ENCODE measurements at regions of chr16 and their contacts with region 1.

Region 1: DNA sequence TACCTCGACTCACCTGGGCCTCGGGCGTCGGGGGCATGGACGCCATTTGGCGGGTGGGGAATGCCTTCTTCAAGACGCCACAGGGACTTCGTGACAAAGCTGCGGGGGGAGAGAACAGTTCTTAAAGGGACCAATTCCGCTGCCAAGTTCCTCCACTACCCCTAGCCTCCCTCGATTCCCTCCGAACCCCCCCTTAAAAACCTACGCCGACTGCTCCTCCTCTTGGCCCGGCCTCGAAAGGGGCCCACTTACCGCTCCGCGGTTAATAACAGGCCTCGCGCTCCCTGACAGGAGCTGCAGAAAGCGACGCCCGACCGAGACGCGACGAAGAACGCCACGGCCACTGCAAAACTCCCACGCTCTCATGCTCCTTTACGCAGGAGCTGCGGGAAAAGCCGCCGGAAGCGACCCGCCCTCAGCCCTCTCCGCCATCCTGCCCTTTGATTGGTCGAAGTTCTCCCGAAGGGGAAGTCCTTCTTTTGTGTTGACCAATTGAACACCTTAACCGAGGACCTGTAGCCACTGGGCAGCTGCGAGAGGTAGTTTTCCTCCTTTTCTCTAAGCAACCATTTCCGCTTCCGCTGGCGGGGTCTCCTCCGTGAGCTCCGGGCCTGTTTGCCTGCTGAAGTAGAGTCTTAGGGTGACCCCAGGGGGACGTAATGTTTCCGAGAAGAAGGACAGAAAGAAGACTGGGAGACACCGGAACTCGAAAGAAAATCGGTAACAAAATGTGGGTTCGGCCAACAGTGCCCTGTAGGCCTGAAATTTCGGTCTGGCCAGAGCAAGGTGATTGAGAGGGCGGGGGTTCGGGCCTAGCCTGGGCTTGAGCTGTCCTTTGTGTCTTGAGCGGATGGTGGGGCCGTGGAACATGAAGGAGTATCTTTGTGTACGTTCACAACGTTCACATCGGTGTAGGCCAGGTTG is at the starts of genes NAA60 and ZNF597:
- DNase-seq: peak; percentile 85 to 89
- H3K4me3 ChIP-seq: peak within 1 kb of the TSS; percentile 61
- H3K4me3 Mint-ChIP-seq: peak within 1 kb of the TSS; percentile 91
- H3K27ac Mint-ChIP-seq: peak within 1 kb of the TSS; percentile 94
- H3K4me1 ChIP-seq: no peaks in the 10 kb centered on the region
- H3K4me1 Mint-ChIP-seq: no peaks in the 10 kb centered on the region
- H3K27me3 ChIP-seq: no peaks in the 10 kb centered on the region
- H3K27me3 Mint-ChIP-seq: no peaks in the 10 kb centered on the region
- CTCF ChIP-seq: no peak
- total RNA-seq, gene NAA60: 84.9 and 92.8 TPM in 2 replicates
- total RNA-seq, gene ZNF597: 3.7 and 3.8 TPM in 2 replicates

Region 2: GRCh38 chr16:3282730-3283524 is 160.4 kb before region 1 on chr16 and contains the start of gene ZNF263:
- CTCF ChIA-PET with region 1: no interaction called
- POLR2A ChIA-PET with region 1: interaction called, 14 read pairs
- intact Hi-C with region 1: loop called (anchors 5 kb)
- DNase-seq: peak; percentile 96
- H3K4me3 ChIP-seq: peak within 1 kb of the TSS; percentile 72
- H3K4me3 Mint-ChIP-seq: peak within 1 kb of the TSS; percentile 98
- H3K27ac Mint-ChIP-seq: peak within 1 kb of the TSS; percentile 99
- H3K4me1 ChIP-seq: peaks cover 19% of the 10 kb centered on the region
- H3K4me1 Mint-ChIP-seq: no peaks in the 10 kb centered on the region
- H3K27me3 ChIP-seq: no peaks in the 10 kb centered on the region
- H3K27me3 Mint-ChIP-seq: no peaks in the 10 kb centered on the region
- CTCF ChIP-seq: no peak
- total RNA-seq, gene ZNF263: 37.0 and 37.4 TPM in 2 replicates

Region 3: GRCh38 chr16:3457434-3458252 is 14.3 kb after region 1 on chr16:
- CTCF ChIA-PET with region 1: interaction called, 6 read pairs
- POLR2A ChIA-PET with region 1: interaction called, 8 read pairs
- intact Hi-C with region 1: loop called (anchors 2 kb)
- DNase-seq: peak; percentile 86 to 95
- H3K4me3 ChIP-seq: peak overlapping the region; percentile 98
- H3K4me3 Mint-ChIP-seq: peak overlapping the region; percentile 76
- H3K27ac Mint-ChIP-seq: peak overlapping the region; percentile 82
- H3K4me1 ChIP-seq: peaks cover 17% of the 10 kb centered on the region
- H3K4me1 Mint-ChIP-seq: peaks cover 37% of the 10 kb centered on the region
- H3K27me3 ChIP-seq: no peaks in the 10 kb centered on the region
- H3K27me3 Mint-ChIP-seq: no peaks in the 10 kb centered on the region
- CTCF ChIP-seq: peak in 1 of 2 experiments; percentile 54